ENCODE measurements at regions of chr6 and their contacts with region 1.

Region 1: GRCh38 chr6:143498428-143498827 is 13.1 kb downstream of the FUCA2 start:
- DNase-seq: no peak
- ATAC-seq: no peak

Region 2: GRCh38 chr6:143136647-143137046 is 361.8 kb before region 1 on chr6:
- intact Hi-C with region 1: loop called (anchors 5 kb)
- DNase-seq: no peak
- ATAC-seq: no peak